Mammary epithelial cell (primary cell): ENCODE measurements at regions of chr16 and their contacts with region 1.

Region 1: DNA sequence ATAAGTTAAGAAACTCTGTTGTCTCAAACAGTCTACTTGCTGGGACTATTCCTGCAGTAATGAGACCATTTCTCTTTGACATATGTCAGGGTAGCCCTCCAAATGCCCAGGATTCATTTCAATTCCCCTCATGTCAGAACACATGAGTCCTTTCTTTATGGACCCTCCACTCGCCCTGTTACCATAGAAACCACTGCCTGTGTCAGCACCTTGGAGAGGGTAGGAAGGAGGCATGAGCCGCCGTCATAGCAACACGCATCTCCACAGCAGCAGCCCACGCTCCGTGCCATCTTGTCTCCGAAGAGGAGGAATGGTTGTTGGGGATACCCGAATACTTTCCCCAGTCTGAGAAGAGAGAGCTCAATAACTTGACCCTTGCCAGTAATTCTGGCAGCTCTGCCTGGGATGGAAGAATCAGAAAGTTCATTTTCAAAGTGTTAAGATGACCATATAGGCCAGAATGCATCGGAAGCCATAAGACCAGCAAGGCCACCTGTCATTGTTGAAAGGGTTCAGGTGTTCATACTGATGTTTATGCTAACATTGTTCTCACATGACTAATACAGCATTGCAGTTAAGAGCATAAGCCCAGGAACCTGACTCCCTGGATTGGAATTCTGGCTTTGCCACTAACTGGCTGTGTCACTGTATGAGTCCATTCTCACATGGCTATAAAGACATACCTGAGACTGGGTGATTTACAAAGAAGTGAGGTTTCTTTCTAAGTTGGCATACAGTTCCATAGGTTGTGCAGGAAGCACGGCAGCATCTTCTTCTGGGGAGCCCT is 141.3 kb downstream of the ABCC12 start:
- DNase-seq: peak; percentile 98
- H3K4me3 ChIP-seq: no peak overlapping the region
- H3K27ac ChIP-seq: peak overlapping the region; percentile 80
- H3K4me1 ChIP-seq: peaks cover 20% of the 10 kb centered on the region
- H3K27me3 ChIP-seq: no peaks in the 10 kb centered on the region
- CTCF ChIP-seq: no peak

Region 2: GRCh38 chr16:48123104-48123788 is 108.7 kb after region 1 on chr16:
- CTCF ChIA-PET with region 1: no interaction called
- dilution Hi-C with region 1: no loop called
- in situ Hi-C with region 1: no loop called
- intact Hi-C with region 1: loop called (anchors 1 kb)
- DNase-seq: peak; percentile 99
- H3K4me3 ChIP-seq: no peak overlapping the region
- H3K27ac ChIP-seq: peak overlapping the region; percentile 23
- H3K4me1 ChIP-seq: peaks cover 33% of the 10 kb centered on the region
- H3K27me3 ChIP-seq: no peaks in the 10 kb centered on the region
- CTCF ChIP-seq: no peak